ENCODE measurements at regions of chr20 and their contacts with region 1.

Region 1: GRCh38 chr20:53547664-53548239 is 45.9 kb downstream of the ZNF217 start:
- DNase-seq: no peak
- ATAC-seq: no peak
- H3K4me3 Mint-ChIP-seq: no peak overlapping the region
- H3K27ac Mint-ChIP-seq: no peak overlapping the region
- H3K4me1 Mint-ChIP-seq: no peaks in the 10 kb centered on the region
- H3K27me3 Mint-ChIP-seq: no peaks in the 10 kb centered on the region
- CTCF ChIP-seq: no peak

Region 2: DNA sequence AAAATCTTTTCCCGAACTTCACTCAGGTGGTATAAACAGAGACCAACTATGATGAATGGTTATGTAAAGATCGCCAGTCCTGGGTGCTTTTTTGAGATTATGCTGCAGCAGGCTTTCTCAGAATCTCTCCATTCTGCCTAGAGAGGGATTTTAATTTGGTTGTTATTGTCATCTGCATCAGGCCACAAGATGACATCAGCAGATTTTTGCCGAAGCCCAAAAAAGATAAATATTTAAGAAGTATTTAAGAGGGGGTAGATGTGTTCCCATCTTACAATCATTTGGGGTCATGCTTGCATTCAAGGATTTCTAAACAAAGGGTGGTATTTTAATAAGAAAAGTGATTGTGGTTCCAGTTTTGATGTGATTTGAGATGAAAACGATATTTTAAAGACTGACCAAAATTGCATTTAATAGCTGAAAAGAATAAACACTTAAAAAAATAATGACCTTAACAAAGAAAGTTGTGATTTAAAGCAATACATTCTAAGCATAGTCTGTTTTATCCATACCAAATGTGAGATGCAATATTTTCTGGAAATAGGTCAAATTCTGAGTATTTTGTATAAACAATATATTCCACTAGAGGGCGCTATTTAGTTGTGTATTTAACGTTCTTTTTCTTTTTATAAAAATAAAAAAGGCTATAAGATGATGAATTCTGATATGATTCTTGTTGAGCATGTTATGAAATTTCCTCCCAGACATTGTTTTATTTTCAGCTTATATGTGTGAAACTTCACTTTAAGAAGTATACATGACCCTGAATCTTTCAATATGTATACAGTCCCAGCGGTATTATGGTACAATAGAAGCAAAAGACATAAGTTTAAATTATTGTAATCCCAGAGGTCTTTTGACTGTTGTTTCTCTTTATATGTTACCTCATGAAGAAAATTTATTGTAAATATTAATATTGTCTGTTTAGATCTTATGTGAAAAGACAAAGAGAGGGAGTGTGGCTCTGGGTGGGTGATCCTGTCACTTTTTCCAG is 1305.2 kb before region 1 on chr20:
- CTCF ChIA-PET with region 1: no interaction called
- POLR2A ChIA-PET with region 1: no interaction called
- intact Hi-C with region 1: loop called (anchors 5 kb)
- DNase-seq: no peak
- ATAC-seq: no peak
- H3K4me3 Mint-ChIP-seq: no peak overlapping the region
- H3K27ac Mint-ChIP-seq: no peak overlapping the region
- H3K4me1 Mint-ChIP-seq: no peaks in the 10 kb centered on the region
- H3K27me3 Mint-ChIP-seq: peaks cover 10% of the 10 kb centered on the region
- CTCF ChIP-seq: peak; percentile 73

Region 3: GRCh38 chr20:52312132-52312729 is 1235.5 kb before region 1 on chr20:
- CTCF ChIA-PET with region 1: interaction called, 6 read pairs
- POLR2A ChIA-PET with region 1: no interaction called
- intact Hi-C with region 1: loop called (anchors 2 kb)
- DNase-seq: no peak
- ATAC-seq: no peak
- H3K4me3 Mint-ChIP-seq: no peak overlapping the region
- H3K27ac Mint-ChIP-seq: no peak overlapping the region
- H3K4me1 Mint-ChIP-seq: no peaks in the 10 kb centered on the region
- H3K27me3 Mint-ChIP-seq: peaks cover 25% of the 10 kb centered on the region
- CTCF ChIP-seq: no peak

Region 4: GRCh38 chr20:53157443-53158408 is 390.0 kb before region 1 on chr20:
- CTCF ChIA-PET with region 1: no interaction called
- POLR2A ChIA-PET with region 1: no interaction called
- intact Hi-C with region 1: loop called (anchors 2 kb)
- DNase-seq: peak; percentile 24
- ATAC-seq: peak; percentile 53
- H3K4me3 Mint-ChIP-seq: peak overlapping the region; percentile 36
- H3K27ac Mint-ChIP-seq: peak overlapping the region; percentile 86
- H3K4me1 Mint-ChIP-seq: peaks cover 43% of the 10 kb centered on the region
- H3K27me3 Mint-ChIP-seq: no peaks in the 10 kb centered on the region
- CTCF ChIP-seq: no peak

Region 5: GRCh38 chr20:53413186-53413631 is 134.5 kb before region 1 on chr20:
- CTCF ChIA-PET with region 1: interaction called, 5 read pairs
- POLR2A ChIA-PET with region 1: no interaction called
- intact Hi-C with region 1: loop called (anchors 1 kb)
- DNase-seq: peak; percentile 43
- ATAC-seq: peak; percentile 70
- H3K4me3 Mint-ChIP-seq: peak overlapping the region; percentile 58
- H3K27ac Mint-ChIP-seq: no peak overlapping the region
- H3K4me1 Mint-ChIP-seq: peaks cover 6% of the 10 kb centered on the region
- H3K27me3 Mint-ChIP-seq: peaks cover 2% of the 10 kb centered on the region
- CTCF ChIP-seq: no peak

Region 6: GRCh38 chr20:53623454-53624211 is 75.9 kb after region 1 on chr20:
- CTCF ChIA-PET with region 1: no interaction called
- POLR2A ChIA-PET with region 1: no interaction called
- intact Hi-C with region 1: no loop called
- DNase-seq: no peak
- ATAC-seq: peak; percentile 76
- H3K4me3 Mint-ChIP-seq: peak overlapping the region; percentile 83
- H3K27ac Mint-ChIP-seq: peak overlapping the region; percentile 93
- H3K4me1 Mint-ChIP-seq: peaks cover 51% of the 10 kb centered on the region
- H3K27me3 Mint-ChIP-seq: no peaks in the 10 kb centered on the region
- CTCF ChIP-seq: no peak